ENCODE measurements at regions of chr21 and their contacts with region 1.

Region 1: GRCh38 chr21:39296891-39297290 is 16.5 kb downstream of the BRWD1 start:
- DNase-seq: no peak
- ATAC-seq: no peak
- H3K4me3 ChIP-seq: no peak overlapping the region
- H3K27ac ChIP-seq: no peak overlapping the region
- H3K4me1 ChIP-seq: no peaks in the 10 kb centered on the region
- H3K27me3 ChIP-seq: no peaks in the 10 kb centered on the region
- CTCF ChIP-seq: no peak

Region 2: DNA sequence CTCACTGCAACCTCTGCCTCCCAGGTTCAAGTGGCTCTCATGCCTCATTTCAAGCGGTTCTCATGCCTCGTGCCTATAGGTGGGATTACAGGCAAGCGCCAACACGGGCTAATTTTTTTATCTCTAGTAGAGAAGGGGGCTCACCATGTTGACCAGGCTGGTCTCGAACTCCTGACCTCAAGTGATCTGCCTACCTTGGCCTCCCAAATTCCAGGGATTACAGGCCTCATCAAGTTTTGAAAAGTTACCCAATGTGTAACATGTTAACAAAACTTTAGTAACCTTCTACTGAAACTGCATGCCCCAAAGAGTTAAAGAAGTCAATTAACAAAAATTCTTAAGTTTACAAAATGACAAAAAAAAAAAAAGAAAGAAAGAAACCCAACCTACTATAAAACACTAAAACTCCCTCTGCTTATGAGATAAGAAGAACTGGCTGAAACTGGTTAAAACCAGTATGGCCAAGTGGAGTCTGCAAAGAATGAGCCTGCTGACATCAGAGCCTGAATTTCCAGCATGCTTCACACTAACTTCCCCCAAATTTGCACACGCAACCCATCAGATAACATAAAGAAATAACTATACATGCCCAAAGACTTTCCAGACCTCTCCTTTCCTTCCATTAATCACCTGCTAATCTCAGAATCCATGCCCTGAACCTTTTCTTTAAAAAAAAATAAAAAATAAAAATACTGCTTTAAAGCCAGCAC is 88.1 kb before region 1 on chr21:
- CTCF ChIA-PET with region 1: no interaction called
- POLR2A ChIA-PET with region 1: no interaction called
- intact Hi-C with region 1: loop called (anchors 5 kb)
- DNase-seq: no peak
- ATAC-seq: no peak
- H3K4me3 ChIP-seq: no peak overlapping the region
- H3K27ac ChIP-seq: no peak overlapping the region
- H3K4me1 ChIP-seq: no peaks in the 10 kb centered on the region
- H3K27me3 ChIP-seq: no peaks in the 10 kb centered on the region
- CTCF ChIP-seq: no peak

Region 3: GRCh38 chr21:39281207-39281606 is 15.7 kb before region 1 on chr21:
- CTCF ChIA-PET with region 1: no interaction called
- POLR2A ChIA-PET with region 1: no interaction called
- intact Hi-C with region 1: no loop called
- DNase-seq: no peak
- ATAC-seq: no peak
- H3K4me3 ChIP-seq: no peak overlapping the region
- H3K27ac ChIP-seq: no peak overlapping the region
- H3K4me1 ChIP-seq: no peaks in the 10 kb centered on the region
- H3K27me3 ChIP-seq: no peaks in the 10 kb centered on the region
- CTCF ChIP-seq: no peak

Measured in PC-3 (cell line).